Endothelial cell of umbilical vein (primary cell): ENCODE measurements at regions of chr12 and their contacts with region 1.

Region 1: DNA sequence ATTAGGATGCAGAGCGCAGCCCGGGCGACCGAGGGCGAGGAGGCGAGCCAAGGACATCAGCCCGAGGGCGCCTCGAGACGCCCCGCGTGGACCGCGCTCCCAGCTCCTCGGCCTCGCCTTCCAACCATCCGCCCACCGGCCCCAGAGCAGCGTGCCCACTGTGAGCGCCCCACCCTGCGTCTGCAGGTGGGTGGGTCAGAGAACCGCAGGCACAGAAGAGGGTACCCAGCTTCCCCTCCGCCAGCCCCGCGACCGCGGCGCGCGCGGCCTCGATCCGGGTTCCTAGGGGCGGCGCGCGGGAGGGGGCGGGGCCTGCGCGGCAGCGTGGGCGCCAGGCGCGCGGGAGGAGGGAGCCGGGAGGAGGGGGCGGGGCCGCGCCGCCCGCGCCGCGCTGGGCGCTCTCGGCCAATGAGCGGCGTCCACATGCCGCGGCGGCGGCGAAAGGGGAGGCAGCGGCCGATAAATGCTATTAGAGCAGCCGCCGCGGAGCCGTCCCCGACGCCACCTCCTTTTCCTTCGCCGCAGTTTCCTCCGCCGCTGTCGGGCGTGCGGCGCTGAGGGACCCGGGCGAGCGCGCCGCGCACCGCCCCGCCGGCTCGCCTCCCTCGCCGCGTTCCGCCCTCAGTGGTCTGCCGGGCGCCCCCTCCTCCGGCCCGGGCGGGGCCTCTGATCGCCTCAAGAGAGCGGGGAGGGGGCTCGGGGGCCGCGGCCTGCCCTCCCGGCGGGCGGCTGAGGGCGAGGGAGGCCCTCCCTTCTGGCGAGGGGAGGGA is at the start of gene ATP2A2:
- DNase-seq: peak; percentile 86
- H3K4me3 ChIP-seq: peak within 1 kb of the TSS; percentile 38 to 95 (median 92)
- H3K27ac ChIP-seq: peak within 1 kb of the TSS; percentile 76
- H3K4me1 ChIP-seq: peaks cover 40% of the 10 kb centered on the region
- H3K27me3 ChIP-seq: no peaks in the 10 kb centered on the region
- CTCF ChIP-seq: no peak
- POLR2A ChIP-seq: peak; percentile 96
- total RNA-seq, gene ATP2A2: 230 and 239 TPM in 2 replicates

Region 2: GRCh38 chr12:110100315-110100970 is 180.5 kb before region 1 on chr12:
- CTCF ChIA-PET with region 1: interaction called, 3 read pairs
- POLR2A ChIA-PET with region 1: no interaction called
- dilution Hi-C with region 1: no loop called
- intact Hi-C with region 1: loop called (anchors 1 kb)
- DNase-seq: peak; percentile 85
- H3K4me3 ChIP-seq: no peak overlapping the region
- H3K27ac ChIP-seq: no peak overlapping the region
- H3K4me1 ChIP-seq: no peaks in the 10 kb centered on the region
- H3K27me3 ChIP-seq: no peaks in the 10 kb centered on the region
- CTCF ChIP-seq: peak; percentile 81 to 89
- POLR2A ChIP-seq: no peak

Region 3: DNA sequence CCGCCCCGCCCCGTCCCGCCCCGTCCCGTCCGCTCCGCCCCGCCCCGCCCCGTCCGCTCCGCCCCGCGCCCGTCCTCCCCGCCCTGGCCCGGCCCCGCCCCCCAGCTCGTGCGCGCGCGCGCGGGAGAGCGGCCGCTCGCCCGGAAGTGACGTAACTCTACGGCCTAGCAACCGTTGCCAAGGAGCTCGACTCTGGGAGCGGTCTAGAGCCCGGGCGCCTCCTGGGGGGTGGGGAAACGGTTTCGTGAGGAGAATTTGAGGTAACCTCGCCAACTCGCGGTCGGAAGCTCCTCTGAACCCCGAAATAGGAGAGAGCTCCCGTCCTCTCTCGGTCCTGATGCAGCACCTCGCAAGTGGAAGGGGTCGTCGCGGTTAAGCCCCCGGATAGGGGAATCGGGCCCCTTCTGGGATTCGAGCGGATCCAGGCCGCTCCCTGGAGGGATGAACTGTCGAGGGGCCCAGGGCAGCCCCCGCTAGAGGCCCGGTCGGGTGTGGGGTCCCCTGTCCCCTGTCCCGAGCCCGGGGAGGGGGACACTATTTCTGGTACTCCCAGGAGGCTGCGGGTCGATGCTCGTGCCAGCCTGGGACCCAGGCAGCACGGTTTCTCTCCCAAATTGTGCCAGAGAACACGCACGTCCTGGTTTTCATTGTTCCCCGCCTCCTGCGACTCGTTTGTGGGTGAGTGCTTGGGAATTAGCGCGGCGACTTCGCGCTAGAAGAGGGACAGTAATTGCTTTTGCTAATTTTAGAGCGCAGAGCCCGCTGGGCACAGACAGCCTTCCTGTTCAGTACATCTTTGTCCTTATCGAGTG is 156.6 kb before region 1 on chr12 and contains the start of gene IFT81:
- CTCF ChIA-PET with region 1: no interaction called
- POLR2A ChIA-PET with region 1: interaction called, 3 read pairs
- dilution Hi-C with region 1: no loop called
- intact Hi-C with region 1: loop called (anchors 5 kb)
- DNase-seq: peak; percentile 89
- H3K4me3 ChIP-seq: peak within 1 kb of the TSS; percentile 22 to 89 (median 57)
- H3K27ac ChIP-seq: peak within 1 kb of the TSS; percentile 66
- H3K4me1 ChIP-seq: no peaks in the 10 kb centered on the region
- H3K27me3 ChIP-seq: peaks cover 3 to 4% of the 10 kb centered on the region in 2 experiments
- CTCF ChIP-seq: no peak
- POLR2A ChIP-seq: peak; percentile 48
- total RNA-seq, gene IFT81: 9.4 and 9.8 TPM in 2 replicates

Region 4: DNA sequence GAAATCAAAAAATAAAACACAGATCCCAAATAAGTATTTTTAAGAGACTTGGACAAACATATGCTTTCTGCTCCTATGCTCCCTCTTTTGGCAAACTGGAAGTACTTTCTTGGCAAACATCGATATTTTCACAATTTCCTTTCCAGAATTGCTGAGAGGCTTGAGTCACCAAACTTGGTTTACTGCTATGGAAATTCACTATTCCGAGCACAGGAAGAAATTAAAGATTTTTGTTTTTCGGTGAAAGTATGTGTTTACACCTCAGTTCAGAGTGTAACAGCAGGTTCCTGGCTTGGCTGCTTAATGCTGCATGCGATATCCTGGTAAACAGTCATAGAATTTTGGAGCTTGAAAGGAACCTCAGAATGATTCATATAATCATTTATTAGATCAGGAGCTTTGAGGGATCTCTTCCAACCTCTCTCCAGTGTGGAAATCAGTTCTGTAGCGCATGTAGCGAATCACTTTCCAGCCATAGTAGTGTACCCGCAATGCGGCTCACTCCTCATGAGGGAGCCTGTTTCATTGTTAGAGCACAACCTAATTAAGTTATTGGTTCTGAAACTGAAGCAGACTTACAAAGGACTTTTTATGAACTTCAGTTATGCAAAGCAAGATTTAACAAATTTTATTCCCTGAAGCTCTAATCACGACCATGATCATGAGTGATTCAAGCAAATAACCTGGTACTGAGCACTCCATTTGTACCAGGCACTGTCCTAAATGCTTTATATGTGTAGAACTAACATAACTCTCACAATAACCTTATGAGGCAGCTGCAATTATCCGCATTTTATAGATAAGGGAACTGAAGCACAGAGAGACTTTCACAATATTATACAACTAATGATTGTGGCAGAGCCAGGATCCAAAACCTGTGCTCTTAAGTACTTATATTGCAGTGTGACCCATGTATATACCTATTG is 56.3 kb before region 1 on chr12:
- CTCF ChIA-PET with region 1: interaction called, 16 read pairs
- POLR2A ChIA-PET with region 1: no interaction called
- dilution Hi-C with region 1: no loop called
- intact Hi-C with region 1: loop called (anchors 2 kb)
- DNase-seq: peak; percentile 85
- H3K4me3 ChIP-seq: peak overlapping the region in 1 of 3 experiments; percentile 46
- H3K27ac ChIP-seq: no peak overlapping the region
- H3K4me1 ChIP-seq: peaks cover 6% of the 10 kb centered on the region
- H3K27me3 ChIP-seq: no peaks in the 10 kb centered on the region
- CTCF ChIP-seq: peak; percentile 43 to 53
- POLR2A ChIP-seq: no peak

Region 5: DNA sequence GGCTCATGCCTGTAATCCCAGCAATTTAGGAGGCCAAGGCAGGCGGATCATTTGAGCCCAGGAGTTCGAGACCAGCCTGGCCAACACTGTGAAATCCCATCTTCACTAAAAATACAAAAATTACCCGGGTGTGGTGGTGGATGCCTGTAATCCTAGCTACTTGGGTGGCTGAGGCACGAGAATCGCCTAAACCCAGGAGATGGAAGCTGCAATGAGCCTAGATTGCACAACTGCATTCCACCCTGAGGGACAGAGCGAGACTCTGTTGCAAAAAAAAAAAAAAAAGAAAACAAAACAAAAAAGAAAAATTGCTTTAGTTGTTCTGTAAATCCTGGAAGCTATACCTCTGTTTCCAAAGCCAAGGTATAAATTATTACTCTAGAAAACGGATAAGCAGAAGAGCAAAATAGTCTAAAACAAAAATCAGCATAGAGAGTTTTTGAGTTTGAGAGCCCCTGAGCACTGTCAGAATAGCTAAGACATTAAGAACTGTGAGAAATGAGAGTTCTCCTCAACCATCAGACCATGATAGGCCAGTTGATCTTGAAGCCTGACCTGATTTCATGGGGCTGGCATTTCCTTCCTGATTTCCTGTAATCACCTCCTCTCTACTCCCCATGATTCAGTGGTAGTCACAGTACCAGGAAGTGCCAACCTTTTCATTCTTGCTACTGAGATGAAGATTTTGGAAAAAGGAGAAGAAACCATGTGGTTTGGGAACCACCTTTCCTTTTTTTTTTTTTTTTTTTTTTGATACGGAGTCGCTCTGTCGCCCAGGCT is 31.8 kb after region 1 on chr12:
- CTCF ChIA-PET with region 1: interaction called, 3 read pairs
- POLR2A ChIA-PET with region 1: interaction called, 5 read pairs
- dilution Hi-C with region 1: no loop called
- intact Hi-C with region 1: loop called (anchors 2 kb)
- DNase-seq: peak; percentile 72
- H3K4me3 ChIP-seq: no peak overlapping the region
- H3K27ac ChIP-seq: peak overlapping the region; percentile 70
- H3K4me1 ChIP-seq: peaks cover 32% of the 10 kb centered on the region
- H3K27me3 ChIP-seq: no peaks in the 10 kb centered on the region
- CTCF ChIP-seq: no peak
- POLR2A ChIP-seq: peak; percentile 59

Region 6: GRCh38 chr12:110338754-110339153 is 57.8 kb after region 1 on chr12:
- CTCF ChIA-PET with region 1: interaction called, 3 read pairs
- POLR2A ChIA-PET with region 1: no interaction called
- dilution Hi-C with region 1: no loop called
- intact Hi-C with region 1: loop called (anchors 2 kb)
- DNase-seq: peak; percentile 17
- H3K4me3 ChIP-seq: no peak overlapping the region
- H3K27ac ChIP-seq: no peak overlapping the region
- H3K4me1 ChIP-seq: no peaks in the 10 kb centered on the region
- H3K27me3 ChIP-seq: no peaks in the 10 kb centered on the region
- CTCF ChIP-seq: peak in 1 of 2 donors; percentile 11
- POLR2A ChIP-seq: no peak

Region 7: DNA sequence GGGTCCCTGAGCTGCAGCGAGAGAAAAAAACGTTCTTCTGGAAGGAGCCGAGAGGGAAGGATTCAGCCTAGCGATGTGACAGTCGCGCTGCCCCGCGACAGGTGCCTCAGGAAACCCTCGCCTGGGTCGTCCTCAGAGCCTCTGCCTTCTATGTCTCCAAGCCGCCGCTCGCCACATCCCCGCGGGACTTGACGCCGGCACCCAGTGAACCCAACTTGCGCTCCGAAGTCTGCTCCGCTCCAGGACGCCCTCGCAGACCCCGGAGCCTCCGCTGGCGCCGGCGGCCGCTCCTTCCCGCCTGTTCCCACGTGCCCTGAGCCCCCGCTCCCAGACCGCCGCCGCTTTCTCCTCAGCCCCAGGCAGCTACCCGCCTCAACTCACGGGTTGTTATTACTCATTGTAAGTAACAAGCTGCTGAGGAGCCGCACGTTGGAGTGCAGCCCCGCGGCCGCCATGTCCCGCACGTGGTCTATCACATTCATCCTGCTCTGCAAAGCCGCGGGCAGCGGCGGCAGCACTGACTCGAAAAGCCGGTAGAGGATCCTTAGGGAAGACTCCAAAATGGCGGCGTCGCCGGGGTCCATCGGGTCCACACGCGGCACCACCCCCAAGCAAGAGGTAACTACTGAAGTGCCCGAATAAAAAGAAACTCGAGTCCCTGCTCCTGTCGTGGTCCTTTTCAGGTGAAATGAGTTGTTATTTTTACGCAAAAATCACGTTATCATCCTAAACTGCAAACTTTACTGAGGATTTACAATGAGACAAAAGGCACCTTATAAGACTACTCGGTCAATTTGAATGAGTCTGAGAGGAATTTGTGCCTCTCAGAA is 122.4 kb after region 1 on chr12 and contains the start of gene ANAPC7:
- CTCF ChIA-PET with region 1: no interaction called
- POLR2A ChIA-PET with region 1: no interaction called
- dilution Hi-C with region 1: no loop called
- intact Hi-C with region 1: loop called (anchors 2 kb)
- DNase-seq: peak; percentile 92
- H3K4me3 ChIP-seq: peak within 1 kb of the TSS; percentile 49 to 84 (median 61)
- H3K27ac ChIP-seq: peak within 1 kb of the TSS; percentile 97
- H3K4me1 ChIP-seq: peaks cover 8% of the 10 kb centered on the region
- H3K27me3 ChIP-seq: no peaks in the 10 kb centered on the region
- CTCF ChIP-seq: no peak
- POLR2A ChIP-seq: peak; percentile 83
- total RNA-seq, gene ANAPC7: 76.6 and 89.0 TPM in 2 replicates